ENCODE measurements at regions of chr15 and their contacts with region 1.

Region 1: DNA sequence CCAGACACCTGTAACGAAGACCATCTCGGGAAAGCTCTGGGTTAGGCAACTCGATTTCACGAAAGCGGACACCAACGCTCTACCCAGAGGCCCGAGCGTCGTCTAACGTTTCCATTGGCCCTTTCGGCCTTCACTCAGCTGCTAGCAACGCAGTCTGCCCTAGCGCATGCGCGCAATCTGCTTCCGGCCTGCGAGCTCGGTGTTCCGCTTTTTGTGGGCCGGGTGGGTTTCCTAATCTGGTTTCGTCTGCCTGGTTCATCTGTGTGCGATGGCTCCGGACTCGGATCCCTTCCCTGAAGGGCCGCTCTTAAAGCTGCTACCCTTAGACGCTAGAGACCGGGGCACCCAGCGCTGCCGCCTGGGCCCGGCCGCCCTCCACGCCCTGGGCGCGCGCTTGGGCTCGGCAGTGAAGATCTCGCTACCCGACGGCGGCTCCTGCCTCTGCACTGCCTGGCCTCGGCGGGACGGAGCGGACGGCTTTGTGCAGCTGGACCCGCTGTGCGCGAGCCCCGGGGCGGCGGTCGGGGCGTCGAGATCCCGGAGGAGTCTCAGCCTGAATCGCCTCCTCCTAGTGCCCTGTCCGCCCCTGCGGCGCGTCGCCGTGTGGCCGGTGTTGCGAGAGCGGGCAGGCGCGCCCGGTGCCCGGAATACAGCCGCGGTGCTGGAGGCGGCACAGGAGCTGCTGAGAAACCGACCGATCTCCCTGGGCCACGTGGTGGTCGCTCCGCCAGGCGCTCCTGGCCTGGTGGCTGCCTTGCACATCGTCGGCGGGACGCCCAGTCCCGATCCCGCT is 24.0 kb upstream of the GATM start:
- DNase-seq: peak; percentile 91

Region 2: GRCh38 chr15:45162771-45163526 is 239.4 kb before region 1 on chr15:
- CTCF ChIA-PET with region 1: interaction called, 12 read pairs
- POLR2A ChIA-PET with region 1: interaction called, 8 read pairs
- DNase-seq: peak; percentile 80

Region 3: DNA sequence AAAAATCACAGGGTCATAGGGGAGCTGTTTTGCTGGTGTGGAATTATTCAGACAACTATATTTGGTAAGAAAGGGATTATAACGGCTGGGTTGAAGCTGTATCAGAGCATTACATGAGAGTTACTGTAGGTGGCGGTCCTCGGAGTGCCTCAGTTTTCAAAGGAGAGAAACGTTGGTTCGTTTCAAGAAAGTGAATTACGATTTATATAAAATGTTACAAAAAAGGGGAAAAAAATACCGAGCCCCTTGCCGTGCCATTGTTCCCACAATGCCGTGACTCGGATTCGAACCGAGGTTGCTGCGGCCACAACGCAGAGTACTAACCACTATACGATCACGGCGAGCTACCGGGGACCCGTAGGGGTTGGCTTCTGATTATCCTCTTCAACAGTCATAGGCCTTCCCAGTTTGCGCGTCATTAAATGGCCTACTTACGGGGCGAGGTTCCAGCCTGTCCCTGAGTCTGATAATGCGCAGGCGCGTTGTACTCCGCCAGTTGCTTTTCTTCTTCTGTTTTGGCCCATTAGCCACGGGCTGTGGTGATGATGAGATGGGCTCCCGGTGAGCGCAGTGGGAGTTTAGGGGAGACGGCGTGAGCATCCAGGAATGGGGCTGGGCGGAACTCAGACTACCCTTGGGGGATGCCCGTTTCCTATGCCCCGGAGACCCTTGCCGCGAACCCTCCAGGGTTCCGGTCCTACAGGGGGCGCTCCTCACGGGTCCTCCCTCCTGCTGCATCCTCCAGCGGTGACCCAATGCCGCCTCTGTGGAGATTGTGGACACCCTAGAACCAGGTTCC is 203.8 kb before region 1 on chr15:
- CTCF ChIA-PET with region 1: no interaction called
- POLR2A ChIA-PET with region 1: interaction called, 23 read pairs
- DNase-seq: peak; percentile 69

Region 4: GRCh38 chr15:45481135-45481534 is 78.8 kb after region 1 on chr15:
- CTCF ChIA-PET with region 1: no interaction called
- POLR2A ChIA-PET with region 1: no interaction called
- DNase-seq: no peak

Measured in HEK293T (cell line).